Colonic mucosa (tissue), 4 donors: ENCODE measurements at regions of chr3 and their contacts with region 1.

Region 1: DNA sequence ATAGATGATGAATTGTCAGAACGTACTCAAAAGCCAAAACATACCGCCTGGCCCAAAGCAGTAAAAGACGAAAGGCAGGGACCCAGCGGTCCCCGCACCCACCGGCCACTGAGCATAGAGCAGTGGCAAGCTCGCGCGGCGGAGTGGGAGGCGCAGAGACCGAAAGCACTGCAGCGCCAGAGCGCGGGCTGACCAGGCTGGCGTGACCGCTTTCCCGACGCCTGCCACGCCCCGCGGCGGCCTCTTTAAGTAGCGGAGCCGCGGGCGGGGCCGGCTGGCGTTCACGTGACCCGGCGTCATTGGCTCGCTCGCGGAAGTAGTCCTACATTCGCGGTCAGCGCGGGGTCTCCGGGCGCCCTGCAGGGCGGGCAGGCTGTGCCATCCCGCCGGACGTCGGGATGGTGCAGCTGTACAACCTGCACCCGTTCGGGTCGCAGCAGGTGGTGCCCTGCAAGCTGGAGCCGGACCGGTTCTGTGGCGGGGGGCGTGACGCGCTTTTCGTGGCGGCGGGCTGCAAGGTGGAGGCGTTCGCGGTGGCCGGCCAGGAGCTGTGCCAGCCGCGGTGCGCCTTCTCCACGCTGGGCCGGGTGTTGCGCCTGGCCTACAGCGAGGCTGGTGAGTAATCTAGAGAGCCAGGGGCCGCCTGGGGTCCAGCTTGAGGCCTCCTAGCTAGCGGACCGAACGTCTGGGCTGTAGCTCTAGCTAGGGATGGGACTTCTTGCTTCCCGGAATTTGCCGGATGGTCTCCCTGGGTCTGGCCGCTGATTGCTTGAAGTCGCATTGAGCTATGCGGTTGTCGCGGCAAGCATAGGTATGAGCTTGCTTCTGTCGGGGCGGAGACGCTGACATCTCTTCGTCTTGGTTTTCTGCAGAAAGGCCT is at the start of gene HPS3:
- DNase-seq: peak; percentile 93
- H3K4me3 ChIP-seq: peak within 1 kb of the TSS; percentile 93
- H3K27ac ChIP-seq: peak within 1 kb of the TSS; percentile 87
- H3K4me1 ChIP-seq: peaks cover 5% of the 10 kb centered on the region
- H3K27me3 ChIP-seq: no peaks in the 10 kb centered on the region
- CTCF ChIP-seq: no peak
- total RNA-seq, gene HPS3: 15.8 to 19.5 TPM

Region 2: GRCh38 chr3:148955544-148956346 is 173.8 kb before region 1 on chr3:
- intact Hi-C with region 1: loop called (anchors 10 kb)
- DNase-seq: peak; percentile 50
- H3K4me3 ChIP-seq: no peak overlapping the region
- H3K27ac ChIP-seq: peak overlapping the region; percentile 50
- H3K4me1 ChIP-seq: no peaks in the 10 kb centered on the region
- H3K27me3 ChIP-seq: no peaks in the 10 kb centered on the region
- CTCF ChIP-seq: peak; percentile 44